GM18951 (cell line): ENCODE measurements at regions of chr1 and their contacts with region 1.

Region 1: DNA sequence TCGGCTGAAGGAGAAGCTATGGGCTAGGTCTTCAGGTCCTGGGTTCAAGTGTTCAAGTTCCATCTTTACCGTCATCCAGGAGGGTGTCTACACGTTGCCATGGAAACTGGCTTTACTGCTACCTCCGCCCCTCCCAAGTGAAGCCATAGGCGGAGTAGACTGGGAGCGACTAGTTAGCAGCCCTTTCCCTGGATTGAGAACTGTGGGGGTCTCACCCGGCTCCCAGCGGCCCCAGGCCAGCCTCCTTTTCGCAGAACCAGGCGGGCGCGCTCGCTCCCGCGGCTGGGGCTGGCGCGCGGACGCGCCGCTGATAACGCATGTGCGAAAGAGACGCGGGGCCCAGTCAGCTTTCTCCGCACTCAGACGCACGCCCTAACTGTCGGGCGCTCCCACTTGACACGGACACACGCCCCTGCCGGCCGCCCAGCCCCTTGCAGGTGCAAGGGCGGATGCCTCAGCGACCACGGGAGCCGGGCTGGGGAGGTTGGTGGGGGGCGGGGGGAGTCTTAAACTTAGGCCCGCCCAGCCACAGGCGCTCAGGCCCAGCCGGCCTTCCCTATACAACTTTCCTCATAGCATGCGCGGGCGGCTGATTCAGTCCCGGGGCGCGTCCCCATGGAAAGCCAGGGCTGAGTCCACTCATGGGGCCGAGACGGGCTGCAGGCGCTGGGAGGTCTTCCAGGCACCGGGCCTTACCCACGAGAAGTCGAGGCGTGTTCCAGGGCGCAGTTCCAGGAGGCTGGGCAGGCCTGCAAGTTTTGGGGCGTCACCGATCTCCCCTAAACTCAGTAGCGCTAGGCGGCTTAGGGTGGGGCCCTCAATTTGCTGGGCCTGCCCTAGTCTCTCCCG is 7.4 kb downstream of the EFNA4 start:
- POLR2A ChIP-seq: no peak

Region 2: GRCh38 chr1:154558575-154559465 is 512.1 kb before region 1 on chr1 and contains the start of gene UBE2Q1:
- in situ Hi-C with region 1: loop called (anchors 10 kb)
- POLR2A ChIP-seq: peak; percentile 64